B cell (primary cell): ENCODE measurements at regions of chr19 and their contacts with region 1.

Region 1: DNA sequence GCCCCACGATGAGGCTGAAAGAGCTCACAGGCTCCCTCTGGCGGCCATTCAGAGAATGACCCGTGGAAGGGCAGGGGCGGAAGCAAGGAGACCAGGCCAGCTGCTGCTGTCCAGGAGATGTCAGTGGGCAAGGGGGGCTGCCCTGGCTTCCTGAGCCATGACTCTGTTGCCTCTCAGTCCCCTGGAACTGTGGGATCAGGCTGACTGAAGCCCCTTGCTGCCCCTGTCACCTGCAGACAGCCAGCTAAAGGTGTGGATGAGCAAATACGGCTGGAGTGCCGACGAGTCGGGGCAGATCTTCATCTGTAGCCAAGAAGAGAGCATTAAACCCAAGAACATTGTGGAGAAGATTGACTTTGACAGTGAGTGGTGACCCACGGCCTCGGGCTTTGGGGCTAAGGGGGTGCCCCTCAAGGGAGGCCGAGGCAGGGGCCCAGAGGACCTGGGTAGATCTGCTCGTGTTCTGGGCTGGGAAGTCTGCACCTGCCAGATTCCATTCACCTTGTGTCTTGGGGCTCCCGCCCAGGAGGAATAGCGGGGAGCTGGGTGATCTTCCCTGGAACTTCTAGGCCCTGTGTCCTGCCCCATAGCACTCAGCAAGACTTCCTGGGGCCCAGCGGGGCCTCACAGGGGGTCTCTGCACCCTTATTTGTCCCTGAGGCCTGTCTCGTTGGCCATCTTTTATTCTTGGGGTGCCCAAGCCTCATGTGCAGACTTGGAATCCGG is 12.5 kb upstream of the ACTN4 start:
- DNase-seq: peak; percentile 80
- ATAC-seq: peak; percentile 50
- H3K4me3 ChIP-seq: no peak overlapping the region
- H3K4me3 Mint-ChIP-seq: no peak overlapping the region
- H3K27ac ChIP-seq: peak overlapping the region in 1 of 2 donors; percentile 30
- H3K27ac Mint-ChIP-seq: peak overlapping the region; percentile 83
- H3K4me1 ChIP-seq: peaks cover 18 to 23% of the 10 kb centered on the region in 2 donors
- H3K4me1 Mint-ChIP-seq: peaks cover 21% of the 10 kb centered on the region
- H3K27me3 ChIP-seq: no peaks in the 10 kb centered on the region
- H3K27me3 Mint-ChIP-seq: no peaks in the 10 kb centered on the region
- CTCF ChIP-seq: peak; percentile 97

Region 2: DNA sequence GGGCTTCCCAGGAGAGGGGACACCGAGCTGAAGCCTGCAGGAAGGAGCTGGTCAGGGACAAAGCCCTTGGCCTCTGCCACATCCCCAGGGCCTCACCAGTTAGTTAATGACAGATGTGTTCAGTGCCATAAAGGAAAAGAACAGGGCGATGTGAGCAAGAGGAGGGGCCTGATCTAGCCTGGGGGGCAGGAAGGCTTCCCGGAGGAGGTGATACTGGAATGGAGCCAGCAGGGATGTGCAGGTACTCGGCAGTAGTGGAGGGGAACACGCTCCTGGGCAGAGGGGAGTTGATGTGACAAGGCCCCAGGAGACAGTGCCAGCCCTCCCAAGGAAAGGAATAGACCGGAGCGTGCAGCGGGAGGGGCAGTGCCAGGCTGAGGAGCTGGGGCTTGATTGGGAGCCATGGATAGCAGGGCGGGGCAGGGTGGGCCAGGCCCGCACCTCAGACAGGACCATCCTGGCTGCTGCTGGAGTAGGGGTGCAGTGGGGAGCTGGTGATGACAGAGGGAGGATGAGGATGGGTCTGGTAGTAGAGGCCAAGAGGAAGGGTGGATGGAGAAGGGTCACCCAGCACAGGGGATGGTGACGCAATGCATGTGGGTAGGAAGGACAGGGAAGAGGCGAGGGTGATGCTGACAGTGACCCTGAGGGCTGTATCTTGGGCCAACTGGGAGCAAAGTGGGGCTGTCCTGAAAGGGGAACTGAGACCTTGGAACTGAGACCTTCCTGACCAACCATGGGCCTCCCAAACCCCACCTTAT is 326.7 kb before region 1 on chr19:
- CTCF ChIA-PET with region 1: no interaction called
- POLR2A ChIA-PET with region 1: no interaction called
- intact Hi-C with region 1: no loop called
- DNase-seq: no peak
- ATAC-seq: no peak
- H3K4me3 ChIP-seq: no peak overlapping the region
- H3K4me3 Mint-ChIP-seq: no peak overlapping the region
- H3K27ac ChIP-seq: no peak overlapping the region
- H3K27ac Mint-ChIP-seq: no peak overlapping the region
- H3K4me1 ChIP-seq: peaks cover 0 to 5% of the 10 kb centered on the region in 2 donors
- H3K4me1 Mint-ChIP-seq: peaks cover 8% of the 10 kb centered on the region
- H3K27me3 ChIP-seq: no peaks in the 10 kb centered on the region
- H3K27me3 Mint-ChIP-seq: no peaks in the 10 kb centered on the region
- CTCF ChIP-seq: no peak

Region 3: DNA sequence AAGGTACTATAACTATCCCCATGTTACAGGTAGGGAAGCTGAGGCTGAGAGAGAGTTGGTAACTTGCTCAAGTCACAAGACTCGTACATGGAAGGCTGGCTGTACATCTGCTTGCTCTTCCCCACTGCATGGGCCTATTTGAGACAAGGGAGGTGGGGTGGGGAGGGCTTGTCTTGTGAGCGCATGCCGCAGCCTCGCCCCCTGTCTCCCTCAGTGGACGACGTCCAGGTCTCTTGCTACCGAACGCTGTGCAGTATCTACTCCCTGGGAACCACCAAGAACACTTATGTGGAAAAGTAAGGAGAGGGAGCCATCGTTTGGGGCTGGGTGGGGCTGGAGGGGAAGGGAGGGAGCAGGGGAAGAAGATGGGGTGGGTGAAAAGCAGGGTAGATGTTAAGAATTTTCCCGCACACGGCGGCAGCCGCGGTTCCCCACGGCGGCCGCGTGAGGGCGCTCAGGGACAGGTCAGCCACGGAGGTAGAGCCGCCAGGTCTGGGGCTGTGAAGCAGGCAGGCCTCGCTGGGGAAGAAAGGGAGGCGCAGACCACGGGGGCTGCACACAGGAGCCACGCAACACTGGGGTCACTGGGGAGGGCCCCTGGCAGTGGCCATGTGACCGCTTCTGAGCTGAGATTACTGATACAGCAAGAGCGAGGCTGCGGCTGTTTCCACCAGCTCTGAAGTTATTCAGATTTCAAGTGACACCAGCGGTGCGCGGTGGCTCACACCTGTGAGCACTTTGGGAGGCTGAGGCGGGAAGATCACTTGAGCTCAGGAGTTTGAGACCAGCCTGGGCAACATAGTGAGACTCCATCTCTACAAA is 119.9 kb before region 1 on chr19:
- CTCF ChIA-PET with region 1: interaction called, 25 read pairs
- POLR2A ChIA-PET with region 1: no interaction called
- intact Hi-C with region 1: loop called (anchors 1 kb)
- DNase-seq: peak; percentile 82
- ATAC-seq: peak; percentile 92
- H3K4me3 ChIP-seq: no peak overlapping the region
- H3K4me3 Mint-ChIP-seq: peak overlapping the region; percentile 37
- H3K27ac ChIP-seq: no peak overlapping the region
- H3K27ac Mint-ChIP-seq: no peak overlapping the region
- H3K4me1 ChIP-seq: peaks cover 4 to 7% of the 10 kb centered on the region in 2 donors
- H3K4me1 Mint-ChIP-seq: peaks cover 6% of the 10 kb centered on the region
- H3K27me3 ChIP-seq: peaks cover 0 to 8% (median 0%) of the 10 kb centered on the region in 4 experiments
- H3K27me3 Mint-ChIP-seq: peaks cover 4% of the 10 kb centered on the region
- CTCF ChIP-seq: peak; percentile 87

Region 4: DNA sequence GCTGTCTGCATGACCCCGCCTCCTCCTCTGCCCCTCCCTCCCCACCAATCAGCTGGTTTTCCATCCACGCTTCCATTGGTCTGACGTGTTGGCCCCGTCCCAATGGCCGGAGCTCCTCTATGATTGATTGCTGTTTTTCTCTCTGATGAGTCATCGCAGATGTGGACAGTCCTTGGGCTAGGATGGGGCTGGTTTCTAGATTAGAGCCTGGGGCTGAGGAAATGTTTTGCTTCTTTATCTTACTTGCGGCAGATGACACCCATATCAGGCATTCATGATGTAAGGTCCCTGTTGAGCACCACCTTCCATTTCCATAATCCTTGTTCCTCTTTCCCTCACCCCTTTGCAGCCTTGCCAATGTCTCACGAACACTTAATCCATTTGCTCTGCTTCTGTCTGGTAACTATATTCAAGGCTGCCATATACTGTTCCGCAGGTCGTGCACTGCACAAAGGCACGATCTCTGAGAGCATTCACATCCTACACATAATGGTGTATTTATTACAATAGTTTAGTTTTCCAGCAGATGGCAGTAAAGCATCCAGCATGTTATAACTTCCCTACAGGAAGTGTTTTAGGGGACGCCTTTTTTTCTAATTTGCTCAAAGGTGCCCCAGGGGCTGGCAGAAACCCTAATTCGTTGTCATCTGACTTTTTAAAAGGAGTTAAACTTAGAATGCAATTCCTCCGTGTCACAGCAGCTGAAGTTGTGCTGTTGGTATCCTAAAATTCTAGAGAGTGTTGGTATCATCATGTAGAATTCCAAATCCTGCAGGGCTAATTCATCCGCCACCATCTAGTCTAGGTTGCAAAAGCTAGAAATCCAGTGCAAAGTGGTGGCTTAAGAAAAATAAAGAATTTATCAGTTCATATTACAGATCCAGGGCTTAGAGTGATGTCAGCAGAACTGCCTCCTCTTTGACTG is 90.6 kb before region 1 on chr19:
- CTCF ChIA-PET with region 1: interaction called, 102 read pairs
- POLR2A ChIA-PET with region 1: no interaction called
- intact Hi-C with region 1: no loop called
- DNase-seq: peak; percentile 78
- ATAC-seq: peak; percentile 81
- H3K4me3 ChIP-seq: peak overlapping the region in 1 of 5 experiments; percentile 38
- H3K4me3 Mint-ChIP-seq: no peak overlapping the region
- H3K27ac ChIP-seq: no peak overlapping the region
- H3K27ac Mint-ChIP-seq: peak overlapping the region; percentile 27
- H3K4me1 ChIP-seq: peaks cover 14 to 27% of the 10 kb centered on the region in 2 donors
- H3K4me1 Mint-ChIP-seq: peaks cover 21% of the 10 kb centered on the region
- H3K27me3 ChIP-seq: peaks cover 0 to 4% (median 0%) of the 10 kb centered on the region in 4 experiments
- H3K27me3 Mint-ChIP-seq: no peaks in the 10 kb centered on the region
- CTCF ChIP-seq: peak; percentile 76

Region 5: DNA sequence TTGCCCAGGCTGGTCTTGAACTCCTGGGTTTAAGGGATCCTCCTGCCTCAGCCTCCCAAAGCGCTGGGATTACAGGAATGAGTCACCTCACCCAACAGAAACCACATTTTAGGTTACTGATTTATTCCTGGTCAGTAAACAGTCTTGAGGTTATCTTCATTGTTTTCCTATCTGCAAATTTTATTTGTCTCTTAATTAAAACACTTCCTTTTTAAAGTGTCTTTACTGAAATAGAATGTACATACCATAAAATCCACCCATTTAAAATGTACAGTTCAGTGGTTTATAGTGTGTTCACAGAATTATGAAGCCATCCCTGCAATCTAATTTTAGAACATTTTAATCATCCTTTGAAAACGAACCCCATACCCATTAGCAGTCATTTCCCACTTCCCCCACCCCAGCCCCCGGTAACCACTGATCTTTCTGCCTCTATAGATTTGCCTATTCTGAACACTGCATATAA is 80.2 kb before region 1 on chr19:
- CTCF ChIA-PET with region 1: interaction called, 15 read pairs
- POLR2A ChIA-PET with region 1: interaction called, 12 read pairs
- intact Hi-C with region 1: loop called (anchors 5 kb)
- DNase-seq: no peak
- ATAC-seq: no peak
- H3K4me3 ChIP-seq: no peak overlapping the region
- H3K4me3 Mint-ChIP-seq: no peak overlapping the region
- H3K27ac ChIP-seq: no peak overlapping the region
- H3K27ac Mint-ChIP-seq: no peak overlapping the region
- H3K4me1 ChIP-seq: peaks cover 0 to 21% of the 10 kb centered on the region in 2 donors
- H3K4me1 Mint-ChIP-seq: peaks cover 28% of the 10 kb centered on the region
- H3K27me3 ChIP-seq: no peaks in the 10 kb centered on the region
- H3K27me3 Mint-ChIP-seq: no peaks in the 10 kb centered on the region
- CTCF ChIP-seq: no peak

Region 6: GRCh38 chr19:38559428-38560401 is 75.2 kb before region 1 on chr19:
- CTCF ChIA-PET with region 1: interaction called, 15 read pairs
- POLR2A ChIA-PET with region 1: interaction called, 12 read pairs
- intact Hi-C with region 1: loop called (anchors 5 kb)
- DNase-seq: peak; percentile 48
- ATAC-seq: peak; percentile 69
- H3K4me3 ChIP-seq: peak overlapping the region in 1 of 5 experiments; percentile 24
- H3K4me3 Mint-ChIP-seq: peak overlapping the region; percentile 66
- H3K27ac ChIP-seq: peak overlapping the region in 1 of 2 donors; percentile 43
- H3K27ac Mint-ChIP-seq: peak overlapping the region; percentile 92
- H3K4me1 ChIP-seq: peaks cover 8 to 33% of the 10 kb centered on the region in 2 donors
- H3K4me1 Mint-ChIP-seq: peaks cover 50% of the 10 kb centered on the region
- H3K27me3 ChIP-seq: peaks cover 0 to 12% (median 4%) of the 10 kb centered on the region in 4 experiments
- H3K27me3 Mint-ChIP-seq: no peaks in the 10 kb centered on the region
- CTCF ChIP-seq: no peak

Region 7: GRCh38 chr19:38647368-38647965 is 12.5 kb after region 1 on chr19 and contains the start of gene ACTN4:
- CTCF ChIA-PET with region 1: interaction called, 9 read pairs
- POLR2A ChIA-PET with region 1: interaction called, 4 read pairs
- intact Hi-C with region 1: loop called (anchors 1 kb)
- DNase-seq: peak; percentile 100
- ATAC-seq: peak; percentile 94
- H3K4me3 ChIP-seq: peak within 1 kb of the TSS; percentile 82 to 96 (median 91)
- H3K4me3 Mint-ChIP-seq: peak within 1 kb of the TSS; percentile 90
- H3K27ac ChIP-seq: peak within 1 kb of the TSS; percentile 40 to 68
- H3K27ac Mint-ChIP-seq: peak within 1 kb of the TSS; percentile 93
- H3K4me1 ChIP-seq: peaks cover 21 to 31% of the 10 kb centered on the region in 2 donors
- H3K4me1 Mint-ChIP-seq: peaks cover 37% of the 10 kb centered on the region
- H3K27me3 ChIP-seq: no peaks in the 10 kb centered on the region
- H3K27me3 Mint-ChIP-seq: no peaks in the 10 kb centered on the region
- CTCF ChIP-seq: no peak
- total RNA-seq, gene ACTN4: 154 and 164 TPM in 2 replicates

Region 8: DNA sequence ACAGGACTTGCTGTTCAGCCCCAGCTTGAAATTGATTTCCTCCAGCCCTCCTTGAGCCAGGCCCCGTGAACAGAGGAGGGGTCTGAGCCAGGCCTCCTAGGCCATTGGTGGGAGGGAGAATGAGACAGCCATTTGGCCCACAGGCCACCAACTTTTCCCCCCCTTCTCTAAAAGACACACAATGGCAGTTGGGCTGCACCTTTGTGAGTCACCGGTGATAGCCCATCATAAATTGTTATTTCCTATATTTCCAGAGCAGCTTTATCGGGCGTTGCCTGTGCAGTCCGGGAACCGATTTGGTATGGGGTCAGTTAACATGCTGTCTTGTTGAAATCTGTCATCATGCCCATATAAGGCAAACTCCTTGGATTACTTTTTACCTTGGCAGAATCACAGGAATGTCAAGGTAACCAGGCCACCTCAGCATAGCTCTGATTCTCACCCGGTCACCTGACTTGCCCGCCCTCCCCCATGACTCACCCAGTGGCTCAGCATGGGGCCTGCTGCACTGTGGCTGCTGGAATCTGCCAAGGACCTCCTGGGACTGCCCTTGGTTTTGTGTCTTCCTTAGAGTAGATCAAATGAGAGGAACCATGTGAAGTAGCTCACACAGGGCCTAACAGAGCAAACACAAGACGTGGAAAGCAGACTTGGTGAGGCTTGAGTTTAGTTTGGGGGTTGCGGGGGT is 48.6 kb after region 1 on chr19:
- CTCF ChIA-PET with region 1: interaction called, 9 read pairs
- POLR2A ChIA-PET with region 1: no interaction called
- intact Hi-C with region 1: loop called (anchors 10 kb)
- DNase-seq: no peak
- ATAC-seq: peak; percentile 37
- H3K4me3 ChIP-seq: no peak overlapping the region
- H3K4me3 Mint-ChIP-seq: peak overlapping the region; percentile 13
- H3K27ac ChIP-seq: peak overlapping the region in 1 of 2 donors; percentile 16
- H3K27ac Mint-ChIP-seq: peak overlapping the region; percentile 69
- H3K4me1 ChIP-seq: peaks cover 35 to 60% of the 10 kb centered on the region in 2 donors
- H3K4me1 Mint-ChIP-seq: peaks cover 74% of the 10 kb centered on the region
- H3K27me3 ChIP-seq: no peaks in the 10 kb centered on the region
- H3K27me3 Mint-ChIP-seq: no peaks in the 10 kb centered on the region
- CTCF ChIP-seq: no peak